Activated CD4-positive, alpha-beta T cell treated with anti-CD3 and anti-CD28 coated beads, Interleukin-2, amount 10 ng/mL, durations not matched to agents 24 days and 14 days (primary cell): ENCODE measurements at regions of chr17 and their contacts with region 1.

Region 1: GRCh38 chr17:40559954-40560591 is 5.2 kb downstream of the CCR7 start:
- DNase-seq: peak; percentile 95
- H3K4me3 Mint-ChIP-seq: peak overlapping the region; percentile 95
- H3K27ac Mint-ChIP-seq: peak overlapping the region; percentile 100
- H3K4me1 Mint-ChIP-seq: peaks cover 71% of the 10 kb centered on the region
- H3K27me3 Mint-ChIP-seq: no peaks in the 10 kb centered on the region

Region 2: DNA sequence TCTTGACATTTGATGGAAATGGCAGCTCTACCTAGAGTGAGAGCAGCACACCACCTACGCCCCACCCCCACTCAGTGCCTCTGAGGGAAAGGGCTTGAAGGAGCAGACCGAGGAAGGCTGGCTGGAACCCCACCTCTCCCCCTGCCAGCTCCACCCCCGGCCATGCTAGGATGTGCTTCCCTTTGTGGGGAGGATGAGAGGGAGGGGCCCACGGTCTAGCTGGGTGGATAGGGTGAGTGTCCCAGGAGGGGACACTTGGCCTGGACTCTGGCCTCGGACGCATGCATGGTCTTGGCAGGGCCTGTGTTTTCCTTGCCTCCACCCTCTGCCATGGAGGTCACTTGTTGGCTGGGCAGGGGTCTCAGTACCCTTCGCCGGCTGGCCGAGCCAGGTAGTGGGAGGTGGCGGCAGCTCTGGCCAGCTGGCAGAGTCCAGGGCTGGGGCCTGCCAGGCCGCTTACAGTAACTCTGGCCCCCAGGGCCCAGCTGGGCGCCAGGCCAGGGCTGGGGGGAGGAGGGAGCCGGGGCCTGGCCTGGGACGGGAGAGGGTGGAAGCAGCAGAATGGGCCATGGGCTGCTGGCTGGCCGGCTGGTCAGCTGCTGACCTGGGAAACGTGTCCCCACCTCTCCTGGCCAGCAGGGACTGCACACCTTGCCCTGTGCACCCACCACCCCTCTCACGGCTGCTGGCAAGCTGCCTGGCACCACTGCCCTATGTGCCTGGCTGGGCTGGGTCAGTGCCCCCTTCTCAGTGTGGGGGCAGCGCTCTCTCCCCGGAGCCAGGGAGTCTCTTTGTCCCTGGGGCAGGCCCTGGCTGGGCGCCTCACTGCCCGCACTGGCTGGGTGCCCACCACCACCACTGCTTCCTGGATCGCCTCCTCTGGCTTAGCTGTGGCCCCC is 228.1 kb before region 1 on chr17:
- intact Hi-C with region 1: no loop called
- DNase-seq: peak; percentile 71
- H3K4me3 Mint-ChIP-seq: peak overlapping the region; percentile 53
- H3K27ac Mint-ChIP-seq: peak overlapping the region; percentile 68
- H3K4me1 Mint-ChIP-seq: peaks cover 68% of the 10 kb centered on the region
- H3K27me3 Mint-ChIP-seq: no peaks in the 10 kb centered on the region

Region 3: GRCh38 chr17:40349920-40350909 is 209.9 kb before region 1 on chr17:
- intact Hi-C with region 1: no loop called
- DNase-seq: no peak
- H3K4me3 Mint-ChIP-seq: no peak overlapping the region
- H3K27ac Mint-ChIP-seq: no peak overlapping the region
- H3K4me1 Mint-ChIP-seq: peaks cover 25% of the 10 kb centered on the region
- H3K27me3 Mint-ChIP-seq: no peaks in the 10 kb centered on the region

Region 4: DNA sequence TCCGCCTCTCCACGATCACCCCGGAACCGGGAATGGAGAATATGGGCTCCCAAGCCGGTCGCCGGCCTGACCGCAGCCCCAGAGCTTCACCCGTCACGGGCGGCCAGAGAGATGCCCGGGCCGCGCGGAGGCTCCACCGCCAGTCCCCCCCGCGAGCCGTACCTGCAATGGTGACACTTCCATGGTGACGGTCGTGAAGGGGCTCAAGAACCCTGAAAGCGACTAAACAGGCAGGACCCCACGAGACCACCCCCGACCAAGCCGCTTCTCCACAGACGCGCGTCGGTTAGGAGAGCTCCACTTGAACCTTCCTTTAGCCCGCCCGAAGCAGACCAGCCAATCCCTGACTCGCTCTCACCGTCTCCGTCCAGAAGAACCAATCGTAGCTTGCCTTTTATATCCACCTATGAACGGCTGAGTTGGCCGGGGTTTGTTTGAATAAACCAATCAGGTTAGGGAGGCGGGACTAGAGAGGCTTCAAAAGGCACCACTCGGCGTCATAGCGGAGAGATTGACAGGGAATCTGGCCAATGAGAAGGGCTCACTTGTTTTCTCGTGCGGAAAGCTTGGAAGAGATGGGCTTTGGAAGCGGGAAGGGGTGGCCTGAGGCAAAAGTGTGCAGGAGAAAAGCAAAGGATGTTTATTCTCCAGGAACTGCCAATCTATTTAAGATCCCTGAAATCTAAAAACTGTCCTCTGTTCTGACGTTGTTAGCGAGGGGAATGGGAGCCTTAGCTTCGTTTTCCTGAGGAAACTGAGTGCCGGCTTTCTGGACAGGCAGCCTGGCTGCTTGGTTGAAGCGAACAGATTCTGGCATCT is 142.3 kb before region 1 on chr17 and contains the start of gene TOP2A:
- intact Hi-C with region 1: loop called (anchors 1 kb)
- DNase-seq: peak; percentile 99
- H3K4me3 Mint-ChIP-seq: peak within 1 kb of the TSS; percentile 99
- H3K27ac Mint-ChIP-seq: peak within 1 kb of the TSS; percentile 97
- H3K4me1 Mint-ChIP-seq: peaks cover 31% of the 10 kb centered on the region
- H3K27me3 Mint-ChIP-seq: no peaks in the 10 kb centered on the region
- total RNA-seq, gene TOP2A: 189 and 194 TPM in 2 replicates

Region 5: DNA sequence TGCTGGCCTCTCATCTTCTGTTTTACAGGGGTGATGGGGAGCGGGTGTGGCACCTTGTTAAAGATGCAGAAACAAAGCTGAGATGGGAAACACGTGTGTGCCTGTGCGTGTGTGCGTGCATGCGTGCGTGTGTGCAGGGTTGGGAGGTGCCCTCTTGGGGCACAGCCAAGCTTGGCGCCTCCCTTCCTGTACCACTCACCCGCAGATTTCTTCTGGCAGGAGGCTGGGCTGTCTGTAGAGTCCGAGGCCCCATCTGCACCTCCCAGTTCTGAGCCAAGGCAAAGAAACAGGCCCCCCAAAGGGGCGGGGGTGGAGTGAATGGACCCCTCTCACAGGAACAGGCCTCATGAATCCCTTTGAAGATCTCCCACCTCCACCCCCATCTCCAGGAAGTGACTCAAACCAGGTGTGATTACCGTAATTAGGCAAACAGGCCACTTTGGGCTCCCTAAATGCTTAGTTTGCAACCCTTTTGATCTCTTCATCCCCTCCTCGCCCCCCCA is 79.5 kb before region 1 on chr17:
- intact Hi-C with region 1: loop called (anchors 1 kb)
- DNase-seq: peak; percentile 93
- H3K4me3 Mint-ChIP-seq: peak overlapping the region; percentile 79
- H3K27ac Mint-ChIP-seq: peak overlapping the region; percentile 95
- H3K4me1 Mint-ChIP-seq: peaks cover 75% of the 10 kb centered on the region
- H3K27me3 Mint-ChIP-seq: no peaks in the 10 kb centered on the region

Region 6: GRCh38 chr17:40542558-40543411 is 17.3 kb before region 1 on chr17:
- intact Hi-C with region 1: loop called (anchors 1 kb)
- DNase-seq: peak; percentile 83
- H3K4me3 Mint-ChIP-seq: peak overlapping the region; percentile 66
- H3K27ac Mint-ChIP-seq: peak overlapping the region; percentile 92
- H3K4me1 Mint-ChIP-seq: peaks cover 80% of the 10 kb centered on the region
- H3K27me3 Mint-ChIP-seq: no peaks in the 10 kb centered on the region

Region 7: DNA sequence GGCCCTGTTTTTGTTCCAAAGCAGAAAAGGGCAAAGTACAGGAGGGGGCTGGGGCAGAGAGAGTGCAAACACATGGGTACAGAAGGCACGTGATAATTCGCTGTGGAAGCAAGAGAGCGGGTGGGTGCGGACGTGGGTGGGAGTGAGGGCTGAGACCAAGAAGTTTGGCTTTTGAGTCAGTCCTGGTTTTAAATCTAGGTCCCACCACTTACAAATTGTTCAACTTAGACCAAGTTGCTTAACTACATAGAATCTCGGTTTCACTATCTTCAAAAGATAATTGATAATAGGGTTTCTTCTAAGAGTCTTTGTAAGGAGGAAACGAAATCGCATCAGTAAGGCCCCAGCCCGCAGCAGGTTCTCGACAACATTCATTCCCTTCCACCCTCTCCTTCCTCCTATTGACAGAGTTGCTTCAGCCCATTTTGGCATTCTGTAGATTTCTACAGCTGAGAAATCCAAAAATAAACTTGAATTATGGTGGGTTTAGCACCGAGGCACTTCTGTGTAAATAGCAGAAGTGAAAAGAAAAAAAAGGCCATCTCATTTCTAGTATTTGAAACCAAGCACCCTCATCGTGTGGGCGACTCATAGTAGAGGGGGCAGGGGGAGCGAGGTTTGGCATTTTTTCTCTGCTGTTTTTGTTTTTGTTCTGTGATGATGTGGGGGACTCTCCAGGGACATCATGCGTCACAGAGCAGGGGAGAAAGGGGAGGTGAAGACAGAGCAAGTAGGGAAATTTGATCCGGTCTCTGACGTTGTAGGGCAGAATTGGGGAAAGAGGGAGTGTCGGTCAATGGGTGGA is 38.8 kb after region 1 on chr17:
- intact Hi-C with region 1: loop called (anchors 1 kb)
- DNase-seq: peak; percentile 88
- H3K4me3 Mint-ChIP-seq: peak overlapping the region; percentile 62
- H3K27ac Mint-ChIP-seq: peak overlapping the region; percentile 92
- H3K4me1 Mint-ChIP-seq: peaks cover 72% of the 10 kb centered on the region
- H3K27me3 Mint-ChIP-seq: no peaks in the 10 kb centered on the region